Tibial artery (tissue), 4 donors: ENCODE measurements at regions of chr1 and their contacts with region 1.

Region 1: DNA sequence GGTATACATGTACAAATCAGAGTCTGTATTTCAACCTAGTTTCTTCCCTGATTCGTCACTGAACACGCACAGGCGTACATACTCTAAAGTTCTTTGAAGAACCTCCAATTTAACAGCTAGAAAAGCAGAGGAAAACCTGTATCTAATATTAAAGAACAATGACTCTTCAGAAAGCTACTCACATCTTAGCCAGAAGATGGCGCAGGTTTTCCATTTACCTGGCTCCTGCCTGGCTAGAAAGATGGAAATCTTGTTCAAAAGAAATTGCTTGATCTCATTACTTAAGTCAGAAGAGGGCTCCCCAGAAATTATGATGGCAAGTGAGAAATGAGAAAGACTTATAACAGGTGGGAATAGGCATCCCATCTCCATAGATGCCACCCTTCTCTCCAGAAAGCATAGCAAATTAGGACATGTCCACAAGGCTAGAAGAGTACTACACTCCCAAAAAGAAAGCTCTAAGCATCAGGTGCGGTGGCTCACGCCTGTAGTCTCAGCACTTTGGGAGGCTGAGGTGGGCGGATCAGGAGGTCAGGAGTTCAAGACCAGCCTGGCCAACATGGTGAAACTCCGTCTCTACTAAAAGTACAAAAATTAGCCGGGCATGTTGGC is 19.0 kb upstream of the L1TD1 start:
- DNase-seq: no peak
- H3K4me3 ChIP-seq: no peak overlapping the region
- H3K27ac ChIP-seq: no peak overlapping the region
- H3K4me1 ChIP-seq: no peaks in the 10 kb centered on the region
- H3K27me3 ChIP-seq: peaks cover 0 to 6% of the 10 kb centered on the region in 2 donors
- CTCF ChIP-seq: peak; percentile 56 to 63

Region 2: DNA sequence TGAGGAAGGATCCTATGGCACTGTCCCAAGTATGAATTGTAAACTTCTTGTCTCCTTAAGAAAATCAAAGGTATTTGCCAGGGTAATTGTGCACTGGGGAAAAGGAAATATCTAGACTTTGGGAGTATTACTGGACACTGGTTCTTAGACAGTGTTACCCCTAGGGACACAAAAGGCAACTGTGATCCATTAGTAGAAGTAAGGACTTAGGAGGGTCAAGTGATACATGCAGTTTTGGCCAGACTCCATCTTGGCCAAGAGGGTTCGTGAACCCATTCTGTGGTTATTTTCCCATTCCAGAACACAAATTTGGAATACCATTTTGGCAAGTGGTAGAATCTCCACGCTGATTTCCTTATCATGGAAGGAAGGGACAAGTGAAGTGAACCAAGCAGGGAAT is 548.9 kb before region 1 on chr1:
- intact Hi-C with region 1: no loop called
- DNase-seq: peak in 1 of 2 donors; percentile 55
- H3K4me3 ChIP-seq: no peak overlapping the region
- H3K27ac ChIP-seq: no peak overlapping the region
- H3K4me1 ChIP-seq: peaks cover 0 to 9% (median 0%) of the 10 kb centered on the region in 4 donors
- H3K27me3 ChIP-seq: no peaks in the 10 kb centered on the region
- CTCF ChIP-seq: no peak

Region 3: GRCh38 chr1:61973100-61973837 is 202.4 kb before region 1 on chr1:
- intact Hi-C with region 1: no loop called
- DNase-seq: no peak
- H3K4me3 ChIP-seq: no peak overlapping the region
- H3K27ac ChIP-seq: no peak overlapping the region
- H3K4me1 ChIP-seq: no peaks in the 10 kb centered on the region
- H3K27me3 ChIP-seq: no peaks in the 10 kb centered on the region
- CTCF ChIP-seq: no peak

Region 4: DNA sequence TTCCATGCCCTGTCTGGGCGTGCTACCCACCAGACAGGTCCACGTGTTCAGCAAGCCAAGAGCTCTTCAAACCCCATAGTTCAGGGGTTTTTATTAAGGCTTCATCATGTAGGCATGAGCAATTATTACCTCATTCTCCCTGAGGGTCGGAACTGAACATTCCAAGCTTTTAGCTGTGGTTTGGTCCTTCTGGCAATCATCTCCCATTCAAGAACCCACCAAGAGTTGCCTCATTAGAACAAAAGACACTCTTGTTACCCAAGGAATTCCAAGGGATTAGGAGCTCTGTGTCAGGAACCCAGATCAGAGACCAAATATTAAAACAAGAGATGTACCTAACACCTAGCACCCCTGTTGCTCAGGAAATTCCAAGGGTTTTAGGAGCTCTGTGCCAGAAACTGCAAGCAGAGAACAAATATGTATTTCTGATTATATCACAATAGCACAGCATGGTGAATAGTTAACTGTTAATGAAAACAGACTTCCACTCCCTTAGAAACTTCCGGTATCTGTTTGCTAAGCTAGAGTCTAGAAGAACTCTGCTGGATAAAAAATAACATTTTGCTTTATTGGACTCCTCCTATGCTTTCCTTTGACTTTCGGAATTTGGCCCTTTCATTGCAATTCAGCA is 182.2 kb before region 1 on chr1:
- intact Hi-C with region 1: no loop called
- DNase-seq: no peak
- H3K4me3 ChIP-seq: no peak overlapping the region
- H3K27ac ChIP-seq: no peak overlapping the region
- H3K4me1 ChIP-seq: peaks cover 0 to 5% (median 0%) of the 10 kb centered on the region in 4 donors
- H3K27me3 ChIP-seq: no peaks in the 10 kb centered on the region
- CTCF ChIP-seq: no peak

Region 5: GRCh38 chr1:62407405-62408009 is 231.8 kb after region 1 on chr1:
- intact Hi-C with region 1: loop called (anchors 5 kb)
- DNase-seq: no peak
- H3K4me3 ChIP-seq: no peak overlapping the region
- H3K27ac ChIP-seq: no peak overlapping the region
- H3K4me1 ChIP-seq: no peaks in the 10 kb centered on the region
- H3K27me3 ChIP-seq: peaks cover 0 to 3% of the 10 kb centered on the region in 2 donors
- CTCF ChIP-seq: peak; percentile 60 to 61

Region 6: DNA sequence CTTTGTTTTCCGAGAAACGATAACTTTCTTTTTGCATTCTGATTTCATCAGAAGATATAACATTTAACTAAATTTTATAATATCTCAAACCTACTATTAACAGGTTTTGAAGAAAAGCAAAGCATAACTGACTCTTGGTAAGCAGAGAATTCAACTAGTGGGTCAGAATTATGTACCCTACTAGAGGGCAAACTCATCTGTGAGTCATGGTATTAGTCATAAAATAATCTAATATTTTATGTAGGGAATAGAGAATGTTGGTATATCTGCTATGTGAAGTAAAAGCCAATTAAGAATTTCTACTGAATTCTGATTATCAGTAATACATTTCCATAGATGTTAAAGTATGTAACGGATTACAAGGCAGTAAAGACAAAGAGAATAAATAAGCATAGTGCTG is 318.0 kb after region 1 on chr1:
- intact Hi-C with region 1: no loop called
- DNase-seq: no peak
- H3K4me3 ChIP-seq: no peak overlapping the region
- H3K27ac ChIP-seq: no peak overlapping the region
- H3K4me1 ChIP-seq: no peaks in the 10 kb centered on the region
- H3K27me3 ChIP-seq: no peaks in the 10 kb centered on the region
- CTCF ChIP-seq: no peak